Activated CD8-positive, alpha-beta T cell treated with anti-CD3 and anti-CD28 coated beads for 36 hours (primary cell): ENCODE measurements at regions of chr16 and their contacts with region 1.

Region 1: GRCh38 chr16:30715737-30716445 is 16.9 kb downstream of the SRCAP start:
- DNase-seq: peak; percentile 68
- ATAC-seq: peak; percentile 98
- H3K4me3 Mint-ChIP-seq: no peak overlapping the region
- H3K27ac Mint-ChIP-seq: peak overlapping the region; percentile 89
- H3K4me1 Mint-ChIP-seq: peaks cover 29% of the 10 kb centered on the region
- H3K27me3 Mint-ChIP-seq: no peaks in the 10 kb centered on the region
- CTCF ChIP-seq: no peak

Region 2: GRCh38 chr16:30728899-30729672 is 13.2 kb after region 1 on chr16:
- CTCF ChIA-PET with region 1: interaction called, 3 read pairs
- POLR2A ChIA-PET with region 1: interaction called, 30 read pairs
- intact Hi-C with region 1: no loop called
- DNase-seq: no peak
- ATAC-seq: no peak
- H3K4me3 Mint-ChIP-seq: no peak overlapping the region
- H3K27ac Mint-ChIP-seq: peak overlapping the region; percentile 39
- H3K4me1 Mint-ChIP-seq: peaks cover 13% of the 10 kb centered on the region
- H3K27me3 Mint-ChIP-seq: no peaks in the 10 kb centered on the region
- CTCF ChIP-seq: no peak

Region 3: GRCh38 chr16:30761928-30762810 is 46.3 kb after region 1 on chr16 and contains the starts of genes CFAP119 and RNF40:
- CTCF ChIA-PET with region 1: no interaction called
- POLR2A ChIA-PET with region 1: no interaction called
- intact Hi-C with region 1: loop called (anchors 10 kb)
- DNase-seq: peak; percentile 97
- ATAC-seq: peak; percentile 97
- H3K4me3 Mint-ChIP-seq: peak within 1 kb of the TSS; percentile 93
- H3K27ac Mint-ChIP-seq: peak within 1 kb of the TSS; percentile 82
- H3K4me1 Mint-ChIP-seq: peaks cover 24% of the 10 kb centered on the region
- H3K27me3 Mint-ChIP-seq: no peaks in the 10 kb centered on the region
- CTCF ChIP-seq: no peak
- total RNA-seq, gene CFAP119: 3.8 to 3.9 TPM
- total RNA-seq, gene RNF40: 63.2 to 68.1 TPM

Region 4: DNA sequence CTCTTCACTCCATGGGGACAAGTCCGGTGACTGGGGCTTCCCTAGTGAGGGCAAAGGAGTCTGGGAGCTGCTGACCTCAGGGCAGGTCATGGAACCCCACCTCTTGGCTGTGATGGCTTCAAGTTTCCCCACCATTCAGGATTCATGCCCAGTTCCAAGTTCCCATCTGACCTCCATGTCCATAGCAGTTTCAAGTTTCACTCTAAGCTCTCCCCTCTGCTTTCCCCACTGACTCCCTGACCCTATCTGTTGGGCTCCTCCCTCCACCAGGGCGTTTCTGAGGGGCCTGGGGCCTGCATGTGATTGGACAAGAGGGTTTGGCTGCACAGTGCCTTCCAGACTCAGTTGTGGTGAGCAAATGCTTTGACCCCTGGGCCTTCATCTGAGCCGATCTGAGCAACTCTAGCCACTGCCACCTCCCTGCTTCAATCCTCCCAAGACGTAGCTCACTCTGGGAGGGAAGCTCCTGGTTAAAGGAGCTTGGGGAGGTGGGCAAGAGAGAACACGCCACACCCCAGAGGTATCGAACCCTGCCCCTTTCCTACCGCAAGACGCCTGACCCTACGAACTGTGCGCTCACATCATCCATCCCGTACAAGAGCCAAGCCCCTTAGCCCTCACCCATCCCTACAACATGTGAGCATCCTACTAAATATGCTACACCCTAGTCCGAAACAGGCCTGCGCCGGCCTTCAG is 62.8 kb after region 1 on chr16:
- CTCF ChIA-PET with region 1: no interaction called
- POLR2A ChIA-PET with region 1: no interaction called
- intact Hi-C with region 1: no loop called
- DNase-seq: no peak
- ATAC-seq: no peak
- H3K4me3 Mint-ChIP-seq: no peak overlapping the region
- H3K27ac Mint-ChIP-seq: no peak overlapping the region
- H3K4me1 Mint-ChIP-seq: peaks cover 19% of the 10 kb centered on the region
- H3K27me3 Mint-ChIP-seq: no peaks in the 10 kb centered on the region
- CTCF ChIP-seq: no peak